Heart left ventricle (tissue), 16 donors: ENCODE measurements at regions of chr6 and their contacts with region 1.

Region 1: GRCh38 chr6:165766457-165766856 is 103.4 kb upstream of the PDE10A start:
- DNase-seq: peak in 1 of 5 donors; percentile 23
- ATAC-seq: peak in 1 of 4 donors; percentile 81
- H3K4me3 ChIP-seq: no peak overlapping the region
- H3K27ac ChIP-seq: peak overlapping the region in 9 of 12 donors; percentile 12 to 77 (median 67)
- H3K4me1 ChIP-seq: peaks cover 0 to 25% (median 13%) of the 10 kb centered on the region in 12 donors
- H3K27me3 ChIP-seq: no peaks in the 10 kb centered on the region
- CTCF ChIP-seq: no peak
- POLR2A ChIP-seq: no peak

Region 2: GRCh38 chr6:165729307-165729936 is 37.0 kb before region 1 on chr6:
- intact Hi-C with region 1: loop called in 2 of 10 experiments (anchors 5 kb)
- DNase-seq: no peak
- ATAC-seq: peak in 2 of 4 donors; percentile 51 to 63
- H3K4me3 ChIP-seq: no peak overlapping the region
- H3K27ac ChIP-seq: no peak overlapping the region
- H3K4me1 ChIP-seq: peaks cover 0 to 5% (median 0%) of the 10 kb centered on the region in 12 donors
- H3K27me3 ChIP-seq: no peaks in the 10 kb centered on the region
- CTCF ChIP-seq: peak; percentile 71 to 92 (median 86)
- POLR2A ChIP-seq: no peak